RWPE1 (cell line): ENCODE measurements at regions of chr11 and their contacts with region 1.

Region 1: GRCh38 chr11:43504316-43504950 is 145.7 kb downstream of the TTC17 start:
- DNase-seq: peak; percentile 51
- H3K27ac ChIP-seq: no peak overlapping the region
- CTCF ChIP-seq: no peak

Region 2: DNA sequence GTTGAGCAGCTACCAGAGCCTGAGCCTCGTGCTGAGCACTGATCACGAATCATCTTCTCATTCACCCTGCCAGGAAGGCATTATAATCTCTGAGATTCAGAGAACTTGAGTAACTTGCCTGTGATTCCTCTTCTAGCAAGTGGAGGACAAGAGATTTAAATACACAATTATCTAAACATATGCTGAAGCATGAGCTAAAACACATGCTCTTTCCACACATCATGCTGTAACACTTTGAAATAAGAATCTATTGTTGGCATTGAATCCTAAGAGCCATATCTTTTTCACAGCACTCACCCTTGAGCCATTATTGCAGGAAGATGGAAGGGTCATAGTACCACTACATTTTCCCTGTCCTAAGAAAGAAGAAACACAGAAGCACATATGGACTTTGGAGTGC is 915.1 kb before region 1 on chr11:
- CTCF ChIA-PET with region 1: no interaction called
- POLR2A ChIA-PET with region 1: no interaction called
- DNase-seq: no peak
- H3K27ac ChIP-seq: no peak overlapping the region
- CTCF ChIP-seq: no peak

Region 3: GRCh38 chr11:43567396-43567975 is 63.1 kb after region 1 on chr11:
- CTCF ChIA-PET with region 1: interaction called, 19 read pairs
- POLR2A ChIA-PET with region 1: no interaction called
- DNase-seq: peak; percentile 62
- H3K27ac ChIP-seq: no peak overlapping the region
- CTCF ChIP-seq: peak; percentile 74

Region 4: DNA sequence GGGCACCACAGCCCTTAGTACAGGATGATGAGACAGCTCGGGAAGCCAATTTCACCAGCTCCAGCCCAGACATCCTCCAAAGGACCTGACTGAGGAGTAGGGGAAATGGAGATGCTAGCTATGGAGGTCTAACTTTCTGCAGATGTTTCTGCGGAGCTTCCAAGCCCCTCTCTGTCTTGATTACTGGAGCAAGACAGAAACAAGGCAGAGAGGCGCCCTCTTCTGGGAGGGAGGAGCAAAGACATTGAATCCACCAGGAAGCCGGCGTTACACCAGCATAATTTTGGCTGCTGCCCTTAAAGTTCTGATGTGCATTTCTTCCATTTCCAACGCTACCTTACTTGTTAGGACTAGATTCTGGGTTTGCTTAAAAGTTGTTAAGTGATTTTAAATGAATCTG is 68.8 kb after region 1 on chr11:
- CTCF ChIA-PET with region 1: interaction called, 10 read pairs
- POLR2A ChIA-PET with region 1: no interaction called
- DNase-seq: no peak
- H3K27ac ChIP-seq: no peak overlapping the region
- CTCF ChIP-seq: peak; percentile 30; the same call in 1 of the 2 replicates

Region 5: DNA sequence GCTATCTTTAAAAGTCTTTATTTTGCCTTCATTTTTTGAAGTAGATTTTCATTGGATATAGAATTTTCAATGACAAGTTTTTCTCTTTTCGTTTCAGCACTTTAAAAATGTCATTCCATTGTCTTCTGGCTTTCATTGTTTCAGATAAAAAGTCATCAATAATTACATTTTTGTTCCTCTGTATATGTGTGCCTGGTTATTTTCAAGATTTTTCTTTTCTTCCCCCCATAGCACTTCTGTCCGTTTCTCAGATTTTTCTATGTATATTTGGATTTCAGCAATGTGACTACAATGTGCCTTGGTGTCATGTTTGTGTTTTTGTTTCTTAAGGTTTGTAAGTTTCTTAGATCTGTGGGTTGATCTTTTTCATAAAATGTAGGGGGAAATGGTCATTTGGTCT is 109.8 kb after region 1 on chr11:
- CTCF ChIA-PET with region 1: no interaction called
- POLR2A ChIA-PET with region 1: no interaction called
- DNase-seq: no peak
- H3K27ac ChIP-seq: no peak overlapping the region
- CTCF ChIP-seq: no peak